ENCODE measurements at regions of chr19 and their contacts with region 1.

Region 1: GRCh38 chr19:6297202-6297601 is 17.4 kb upstream of the MLLT1 start:
- DNase-seq: no peak
- ATAC-seq: no peak

Region 2: GRCh38 chr19:4415352-4415751 is 1881.8 kb before region 1 on chr19:
- intact Hi-C with region 1: no loop called
- DNase-seq: no peak
- ATAC-seq: peak; percentile 22

Region 3: DNA sequence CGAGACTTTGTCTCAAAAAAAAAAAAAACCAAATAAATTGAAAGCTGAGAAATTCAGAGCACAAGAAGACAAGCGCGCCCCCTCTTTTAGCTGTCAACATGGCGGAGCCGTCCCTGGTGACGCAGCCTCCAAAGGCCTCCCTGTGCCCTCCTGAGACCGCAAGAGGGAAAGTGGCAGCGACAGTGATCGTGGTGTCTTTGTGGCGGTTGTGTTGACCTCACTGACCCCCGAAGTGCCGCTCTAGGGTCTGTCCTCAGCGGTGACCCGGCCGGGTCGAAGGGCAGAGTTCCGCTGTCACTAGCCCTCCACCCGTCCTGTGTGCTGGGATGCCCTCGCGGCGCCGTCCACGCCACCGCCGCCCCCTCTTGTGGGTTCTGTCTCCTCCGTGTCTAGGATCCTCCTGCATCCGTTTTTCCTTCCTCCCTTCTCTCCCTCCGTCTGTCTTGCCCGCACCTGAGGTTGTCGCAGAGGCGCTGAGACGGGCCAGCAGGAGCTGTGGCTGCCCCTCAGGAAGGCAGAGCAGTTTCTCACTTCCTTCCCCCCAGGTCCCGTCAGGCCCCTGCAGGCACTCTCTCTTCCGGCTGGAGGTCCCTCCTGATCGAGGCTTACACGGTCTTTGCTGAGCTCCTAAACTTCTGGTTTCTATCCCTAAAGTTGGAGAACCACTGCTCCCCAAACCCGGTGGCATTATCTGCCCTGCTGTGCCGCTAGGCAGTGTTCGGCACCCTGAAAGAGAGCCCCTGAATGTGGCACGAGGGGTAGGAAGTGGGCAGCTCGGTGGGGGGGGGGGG is 1380.7 kb before region 1 on chr19:
- intact Hi-C with region 1: loop called (anchors 5 kb)
- DNase-seq: no peak
- ATAC-seq: no peak

Region 4: DNA sequence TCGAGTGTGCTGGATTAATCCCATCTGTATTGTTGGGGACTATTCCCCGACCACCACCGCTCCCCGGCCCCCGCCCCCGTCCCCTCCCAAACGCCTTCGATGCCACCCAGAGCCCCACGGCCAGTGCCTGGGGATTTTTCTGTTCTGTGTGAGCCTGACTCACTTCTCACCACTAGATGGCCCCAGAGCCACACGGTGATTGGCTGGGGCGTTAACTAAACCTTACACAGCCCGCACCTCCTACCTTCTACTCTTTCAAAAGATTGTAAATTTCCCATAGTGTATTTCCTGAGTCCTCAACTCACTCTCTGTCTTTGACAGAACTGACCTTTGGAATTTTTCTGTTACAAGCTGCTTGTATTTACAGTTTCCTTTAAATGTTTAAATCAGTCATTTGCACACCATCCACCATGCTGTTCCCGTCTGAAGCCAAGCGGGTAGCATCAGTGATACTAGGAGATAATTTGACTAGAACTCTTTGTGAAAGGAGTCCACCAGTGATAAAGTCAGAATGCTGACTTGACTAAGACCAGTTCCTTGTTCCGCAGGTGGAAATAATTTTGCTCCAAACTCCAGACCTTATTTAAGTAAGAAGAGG is 248.3 kb before region 1 on chr19:
- intact Hi-C with region 1: loop called (anchors 5 kb)
- DNase-seq: peak; percentile 84
- ATAC-seq: peak; percentile 97

Region 5: GRCh38 chr19:6173190-6173589 is 124.0 kb before region 1 on chr19:
- intact Hi-C with region 1: no loop called
- DNase-seq: no peak
- ATAC-seq: no peak

Region 6: GRCh38 chr19:6218491-6219162 is 78.6 kb before region 1 on chr19:
- intact Hi-C with region 1: loop called (anchors 5 kb)
- DNase-seq: peak; percentile 96
- ATAC-seq: peak; percentile 83